Right ventricle myocardium inferior (tissue), 1 donor: ENCODE measurements at regions of chr7 and their contacts with region 1.

Region 1: GRCh38 chr7:44131173-44132029 is 8.1 kb upstream of the POLD2 start:
- DNase-seq: peak; percentile 53
- ATAC-seq: peak; percentile 73

Region 2: DNA sequence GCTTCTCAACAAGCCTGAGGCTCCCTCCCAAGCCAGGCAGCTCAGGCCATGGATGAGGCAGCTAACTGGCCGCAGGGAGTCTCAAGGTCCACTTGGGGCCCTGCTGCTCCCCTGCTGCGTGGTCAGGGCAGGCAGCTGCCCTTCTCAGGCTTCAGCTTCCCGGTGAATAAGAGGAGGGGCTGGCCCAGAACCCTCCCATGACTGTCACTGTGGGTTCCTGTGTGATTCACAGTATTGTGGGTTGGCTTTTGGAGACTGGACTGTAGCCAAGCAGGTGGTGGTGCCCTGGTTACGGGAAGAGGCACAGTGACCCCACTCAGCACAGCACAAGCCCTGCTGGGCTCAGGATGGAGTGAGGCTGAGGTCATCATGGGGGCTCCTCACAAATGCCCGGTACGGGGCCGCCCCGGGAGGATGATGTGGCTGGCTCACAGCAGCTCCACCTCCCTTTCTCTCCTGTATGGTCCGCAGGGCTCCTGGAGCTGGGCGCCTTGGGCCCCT is 829.1 kb before region 1 on chr7:
- intact Hi-C with region 1: no loop called
- DNase-seq: no peak
- ATAC-seq: no peak

Region 3: GRCh38 chr7:44112231-44113000 is 19.0 kb before region 1 on chr7:
- intact Hi-C with region 1: no loop called
- DNase-seq: peak; percentile 72
- ATAC-seq: no peak

Region 4: DNA sequence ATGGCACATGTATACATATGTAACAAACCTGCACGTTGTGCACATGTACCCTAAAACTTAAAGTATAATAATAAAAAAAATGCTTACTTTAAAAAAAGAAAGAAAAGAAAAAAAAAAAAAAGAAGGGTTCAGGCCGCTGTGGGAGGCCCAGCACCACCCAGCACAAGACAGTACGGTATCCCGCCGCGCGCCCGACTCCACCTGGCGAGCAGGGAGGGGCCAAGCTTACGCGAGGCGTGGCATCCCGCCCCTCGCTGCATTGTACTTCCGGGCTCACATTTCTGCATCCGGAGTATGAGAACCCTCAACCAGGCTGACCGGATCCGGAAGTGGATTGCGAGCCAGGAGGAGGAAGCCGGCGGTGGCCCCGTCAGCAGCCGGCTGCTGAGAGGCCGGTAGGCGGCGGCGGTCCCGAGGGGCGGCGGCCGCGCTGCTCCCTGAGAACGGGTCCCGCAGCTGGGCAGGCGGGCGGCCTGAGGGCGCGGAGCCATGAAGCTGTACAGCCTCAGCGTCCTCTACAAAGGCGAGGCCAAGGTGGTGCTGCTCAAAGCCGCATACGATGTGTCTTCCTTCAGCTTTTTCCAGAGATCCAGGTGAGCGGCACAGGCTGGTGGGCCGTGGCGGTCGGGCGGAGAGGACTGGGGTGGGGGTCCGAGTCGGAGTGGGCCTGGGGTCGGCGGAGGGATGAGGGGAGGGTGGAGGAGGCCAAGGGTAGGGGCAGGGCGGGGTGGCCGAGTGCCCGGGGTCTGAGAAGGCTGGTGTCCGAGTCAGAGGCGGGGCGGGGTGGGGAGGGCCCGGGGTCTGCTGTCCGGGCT is 69.5 kb after region 1 on chr7 and contains the start of gene YKT6:
- intact Hi-C with region 1: loop called (anchors 2 kb)
- DNase-seq: peak; percentile 96
- ATAC-seq: peak; percentile 98
- total RNA-seq, gene YKT6: 58.0 TPM

Region 5: GRCh38 chr7:44291066-44291732 is 159.8 kb after region 1 on chr7:
- intact Hi-C with region 1: loop called (anchors 10 kb)
- DNase-seq: peak; percentile 91
- ATAC-seq: peak; percentile 69

Region 6: DNA sequence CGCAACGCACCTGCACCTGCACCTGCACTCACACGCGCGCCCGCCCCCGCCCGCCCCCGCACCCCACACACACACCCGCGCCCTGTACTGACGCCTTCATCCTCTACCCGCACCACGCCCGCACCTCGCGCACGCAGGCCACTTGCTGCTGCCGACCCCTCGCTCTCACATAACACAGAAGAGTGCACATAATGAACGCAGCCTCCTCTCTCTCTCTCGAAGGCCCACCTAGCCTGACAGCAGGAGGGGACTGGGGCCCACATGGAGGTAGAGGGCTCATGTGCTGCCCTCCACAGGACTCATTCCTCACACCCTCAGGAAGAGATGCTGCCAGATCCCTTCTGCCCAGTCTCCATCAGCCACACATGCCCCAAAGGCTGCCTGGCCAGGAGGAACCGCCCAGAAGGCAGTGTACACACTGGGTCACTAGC is 194.4 kb after region 1 on chr7:
- intact Hi-C with region 1: loop called (anchors 10 kb)
- DNase-seq: no peak
- ATAC-seq: no peak